ENCODE measurements at regions of chr11 and their contacts with region 1.

Region 1: DNA sequence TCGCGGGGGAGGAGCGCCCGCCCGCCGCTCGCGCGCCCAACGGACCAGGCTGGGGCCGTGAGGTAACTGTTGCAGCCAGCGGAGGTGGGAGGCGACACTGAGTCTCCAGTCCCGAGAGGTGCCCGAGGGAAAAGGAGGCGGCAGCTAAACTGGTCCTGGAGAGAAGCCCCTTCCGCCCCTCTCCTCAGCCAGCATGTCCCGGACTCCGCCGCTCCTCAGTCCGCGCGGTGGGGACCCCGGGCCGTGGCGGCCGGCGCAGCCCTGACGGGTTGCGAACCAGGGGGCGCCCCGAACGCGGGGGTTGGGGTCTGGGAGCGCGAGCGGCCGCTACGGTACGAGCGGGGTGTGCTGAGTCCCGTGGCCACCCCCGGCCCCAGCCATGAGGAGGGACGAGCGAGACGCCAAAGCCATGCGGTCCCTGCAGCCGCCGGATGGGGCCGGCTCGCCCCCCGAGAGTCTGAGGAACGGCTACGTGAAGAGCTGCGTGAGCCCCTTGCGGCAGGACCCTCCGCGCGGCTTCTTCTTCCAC is at the start of gene PDE3B:
- DNase-seq: peak; percentile 93
- H3K4me3 Mint-ChIP-seq: peak within 1 kb of the TSS; percentile 83
- H3K27ac Mint-ChIP-seq: peak within 1 kb of the TSS; percentile 94
- H3K4me1 Mint-ChIP-seq: peaks cover 31% of the 10 kb centered on the region
- H3K27me3 Mint-ChIP-seq: no peaks in the 10 kb centered on the region
- total RNA-seq, gene PDE3B: 49.3 and 52.8 TPM in 2 replicates

Region 2: GRCh38 chr11:14499554-14500180 is 144.1 kb before region 1 on chr11 and contains the start of gene COPB1:
- intact Hi-C with region 1: loop called (anchors 1 kb)
- DNase-seq: peak; percentile 98
- H3K4me3 Mint-ChIP-seq: peak within 1 kb of the TSS; percentile 99
- H3K27ac Mint-ChIP-seq: peak within 1 kb of the TSS; percentile 96
- H3K4me1 Mint-ChIP-seq: peaks cover 34% of the 10 kb centered on the region
- H3K27me3 Mint-ChIP-seq: no peaks in the 10 kb centered on the region
- total RNA-seq, gene COPB1: 91.8 and 93.5 TPM in 2 replicates

Region 3: GRCh38 chr11:14537134-14537599 is 106.6 kb before region 1 on chr11:
- intact Hi-C with region 1: loop called (anchors 2 kb)
- DNase-seq: peak; percentile 82
- H3K4me3 Mint-ChIP-seq: peak overlapping the region; percentile 70
- H3K27ac Mint-ChIP-seq: peak overlapping the region; percentile 87
- H3K4me1 Mint-ChIP-seq: peaks cover 32% of the 10 kb centered on the region
- H3K27me3 Mint-ChIP-seq: no peaks in the 10 kb centered on the region

Region 4: DNA sequence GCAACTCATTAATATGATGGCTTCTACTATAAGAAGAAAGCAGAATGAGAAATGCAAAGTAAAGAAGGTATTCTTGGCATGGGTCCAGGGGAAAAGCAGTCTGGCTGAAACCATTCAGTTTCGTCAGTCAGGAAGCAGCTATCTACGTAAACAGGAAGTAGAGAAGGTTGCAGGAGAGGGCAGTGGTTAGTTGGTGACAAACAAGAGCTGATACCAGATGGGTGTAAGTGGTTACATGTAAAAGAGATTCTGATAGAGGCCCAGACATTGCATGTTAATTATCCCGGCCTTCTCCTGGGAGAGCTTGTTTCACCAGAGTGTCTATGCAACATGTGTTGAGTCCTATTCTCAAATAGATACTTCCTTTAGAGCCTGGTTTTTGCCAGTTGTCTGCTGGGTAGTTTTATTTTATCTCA is 65.2 kb before region 1 on chr11:
- intact Hi-C with region 1: loop called (anchors 1 kb)
- DNase-seq: peak; percentile 92
- H3K4me3 Mint-ChIP-seq: peak overlapping the region; percentile 74
- H3K27ac Mint-ChIP-seq: peak overlapping the region; percentile 90
- H3K4me1 Mint-ChIP-seq: peaks cover 51% of the 10 kb centered on the region
- H3K27me3 Mint-ChIP-seq: no peaks in the 10 kb centered on the region

Region 5: DNA sequence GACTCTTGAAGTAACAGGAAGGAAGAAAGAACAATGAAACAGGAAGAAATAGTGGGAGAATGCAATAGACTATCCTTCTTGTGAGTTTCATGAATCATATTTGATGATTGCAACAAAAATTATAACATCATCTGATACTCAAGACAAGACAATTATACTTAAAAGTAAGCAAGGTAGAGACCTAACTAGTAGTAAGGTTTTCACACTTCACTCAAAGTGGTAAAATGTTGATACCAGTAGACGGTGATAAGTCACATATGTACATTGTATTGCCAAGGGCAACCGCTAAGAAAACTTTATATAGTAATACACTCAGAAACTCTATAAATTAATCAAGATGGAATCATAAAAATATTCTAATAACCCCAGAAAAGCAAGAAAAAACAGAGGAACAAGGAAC is 140.5 kb after region 1 on chr11:
- intact Hi-C with region 1: no loop called
- DNase-seq: no peak
- H3K4me3 Mint-ChIP-seq: no peak overlapping the region
- H3K27ac Mint-ChIP-seq: peak overlapping the region; percentile 84
- H3K4me1 Mint-ChIP-seq: peaks cover 37% of the 10 kb centered on the region
- H3K27me3 Mint-ChIP-seq: no peaks in the 10 kb centered on the region

Region 6: DNA sequence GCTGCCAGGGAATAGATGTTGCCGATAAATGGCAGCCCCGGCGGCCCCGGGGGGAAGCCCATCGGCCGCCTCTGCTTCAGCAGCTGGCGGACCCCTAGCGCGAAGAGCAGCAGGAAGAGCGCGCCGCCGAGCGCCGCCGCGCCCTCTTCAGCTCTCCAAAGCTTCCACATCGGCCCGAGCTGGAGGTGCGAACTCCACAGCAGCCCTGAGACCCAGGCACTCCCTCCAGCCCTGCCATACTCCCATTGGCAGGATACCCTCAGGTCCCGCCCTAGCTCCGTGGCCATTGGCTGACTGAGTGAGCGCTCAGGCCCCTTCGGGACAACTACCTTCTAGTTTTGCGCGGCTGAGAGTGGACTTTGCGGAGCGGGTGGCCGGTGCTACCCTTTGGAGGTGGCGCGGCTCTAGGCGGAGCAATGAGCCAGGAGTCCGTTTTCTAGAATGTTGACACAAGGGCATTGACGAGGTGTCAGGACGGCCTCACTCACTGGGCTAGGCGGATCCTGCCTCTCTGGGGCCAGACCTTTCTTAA is 248.3 kb after region 1 on chr11 and contains the start of gene CYP2R1:
- intact Hi-C with region 1: loop called (anchors 1 kb)
- DNase-seq: peak; percentile 98
- H3K4me3 Mint-ChIP-seq: peak within 1 kb of the TSS; percentile 93
- H3K27ac Mint-ChIP-seq: peak within 1 kb of the TSS; percentile 99
- H3K4me1 Mint-ChIP-seq: peaks cover 53% of the 10 kb centered on the region
- H3K27me3 Mint-ChIP-seq: no peaks in the 10 kb centered on the region
- total RNA-seq, gene CYP2R1: 13.1 and 13.7 TPM in 2 replicates

Measured in activated CD4-positive, alpha-beta T cell treated with anti-CD3 and anti-CD28 coated beads, Interleukin-2, amount 10 ng/mL, durations not matched to agents 24 days and 14 days (primary cell).